ENCODE measurements at regions of chr4 and their contacts with region 1.

Region 1: DNA sequence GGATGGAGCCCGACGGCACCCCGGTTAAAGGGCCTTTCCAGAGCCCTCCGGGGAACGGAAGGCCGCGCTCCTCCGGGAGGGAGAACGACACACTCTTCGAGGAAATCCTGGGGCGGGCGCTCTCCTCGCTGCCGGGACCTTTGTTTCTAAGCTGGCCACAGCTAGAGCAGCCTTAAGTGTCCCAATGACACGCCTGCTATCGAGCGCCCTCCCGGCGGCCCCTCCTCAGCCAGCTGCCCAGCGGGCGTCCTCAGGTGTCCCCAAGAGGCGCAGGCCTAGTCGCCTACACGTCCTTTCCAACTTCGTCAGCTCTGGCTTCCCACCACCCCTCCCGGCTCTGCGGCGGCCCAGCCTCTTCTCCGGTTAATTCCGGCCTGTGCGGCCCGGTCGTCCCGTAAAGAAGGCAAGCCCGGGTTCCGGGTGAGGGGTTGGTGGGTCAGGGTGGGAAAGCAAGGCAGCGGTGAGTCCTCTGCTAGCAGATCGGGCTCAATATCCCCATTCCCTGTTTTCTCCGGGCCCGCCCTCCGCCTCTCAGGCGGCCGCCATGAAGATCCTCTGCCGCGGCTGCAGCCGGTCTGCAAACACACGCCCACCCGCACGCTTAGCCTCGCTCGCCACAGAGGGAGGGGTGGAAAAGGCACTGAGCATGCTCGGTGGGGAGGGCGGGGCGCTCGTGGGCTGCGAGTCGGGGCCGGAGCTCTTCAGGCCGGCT is 449 bp upstream of the RAP1GDS1 start:
- DNase-seq: peak; percentile 95
- ATAC-seq: peak; percentile 91
- H3K4me3 ChIP-seq: peak overlapping the region; percentile 71 to 98 (median 95)
- H3K4me3 Mint-ChIP-seq: peak overlapping the region; percentile 97
- H3K27ac ChIP-seq: peak overlapping the region; percentile 84 to 90
- H3K27ac Mint-ChIP-seq: peak overlapping the region; percentile 98
- H3K4me1 ChIP-seq: peaks cover 18 to 25% of the 10 kb centered on the region in 2 donors
- H3K4me1 Mint-ChIP-seq: peaks cover 40% of the 10 kb centered on the region
- H3K27me3 ChIP-seq: no peaks in the 10 kb centered on the region
- H3K27me3 Mint-ChIP-seq: no peaks in the 10 kb centered on the region
- CTCF ChIP-seq: no peak

Region 2: GRCh38 chr4:98150092-98150761 is 110.5 kb before region 1 on chr4:
- CTCF ChIA-PET with region 1: interaction called, 8 read pairs
- POLR2A ChIA-PET with region 1: interaction called, 5 read pairs
- intact Hi-C with region 1: loop called (anchors 2 kb)
- DNase-seq: peak; percentile 13
- ATAC-seq: no peak
- H3K4me3 ChIP-seq: no peak overlapping the region
- H3K4me3 Mint-ChIP-seq: no peak overlapping the region
- H3K27ac ChIP-seq: no peak overlapping the region
- H3K27ac Mint-ChIP-seq: no peak overlapping the region
- H3K4me1 ChIP-seq: peaks cover 7 to 20% of the 10 kb centered on the region in 2 donors
- H3K4me1 Mint-ChIP-seq: peaks cover 23% of the 10 kb centered on the region
- H3K27me3 ChIP-seq: no peaks in the 10 kb centered on the region
- H3K27me3 Mint-ChIP-seq: no peaks in the 10 kb centered on the region
- CTCF ChIP-seq: peak; percentile 70

Region 3: DNA sequence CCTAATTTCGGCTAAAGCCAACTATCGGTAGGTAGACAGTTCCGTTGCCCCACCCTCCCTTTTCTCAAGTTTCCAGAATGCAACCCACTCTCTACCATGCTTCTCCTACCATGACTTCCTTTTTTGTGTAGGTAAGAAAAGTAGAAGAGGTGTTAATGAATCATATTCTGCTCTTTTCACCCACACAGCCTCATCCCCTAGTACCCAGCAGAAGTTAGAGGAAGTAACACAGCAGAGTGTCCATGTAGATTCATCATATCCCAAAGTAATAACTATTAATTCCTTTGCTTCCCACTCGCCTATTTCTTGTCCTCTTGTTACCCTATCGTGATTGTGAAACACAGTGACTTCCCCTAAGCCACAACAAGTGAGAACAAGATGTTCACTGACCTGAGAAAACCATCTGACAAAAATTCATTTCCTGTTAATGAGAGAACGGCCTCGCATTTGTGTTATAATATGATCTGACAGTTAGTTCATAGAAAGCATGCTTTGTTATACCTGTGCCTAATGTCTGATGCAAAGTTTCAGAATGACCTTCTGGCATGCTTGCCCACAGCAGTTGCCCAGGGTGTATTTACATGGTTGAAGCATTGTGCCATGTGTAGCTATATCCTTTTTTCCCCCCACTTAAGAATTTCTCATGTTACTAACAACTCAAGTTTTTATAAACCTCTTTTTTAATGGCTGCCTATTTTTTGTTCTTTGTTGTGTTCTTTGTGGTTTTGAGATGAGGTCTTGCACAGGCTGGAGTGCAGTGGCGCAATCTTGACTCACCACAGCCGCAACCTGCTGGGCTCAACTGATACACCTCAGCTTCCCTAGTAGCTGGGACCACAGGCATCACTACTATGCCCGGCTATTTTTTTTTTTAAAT is 186.0 kb after region 1 on chr4:
- CTCF ChIA-PET with region 1: interaction called, 3 read pairs
- POLR2A ChIA-PET with region 1: interaction called, 3 read pairs
- intact Hi-C with region 1: loop called (anchors 2 kb)
- DNase-seq: peak; percentile 75
- ATAC-seq: peak; percentile 72
- H3K4me3 ChIP-seq: peak overlapping the region in 4 of 5 experiments; percentile 32 to 53 (median 48)
- H3K4me3 Mint-ChIP-seq: peak overlapping the region; percentile 75
- H3K27ac ChIP-seq: peak overlapping the region; percentile 69 to 70
- H3K27ac Mint-ChIP-seq: peak overlapping the region; percentile 93
- H3K4me1 ChIP-seq: peaks cover 35 to 42% of the 10 kb centered on the region in 2 donors
- H3K4me1 Mint-ChIP-seq: peaks cover 45% of the 10 kb centered on the region
- H3K27me3 ChIP-seq: no peaks in the 10 kb centered on the region
- H3K27me3 Mint-ChIP-seq: no peaks in the 10 kb centered on the region
- CTCF ChIP-seq: no peak

Region 4: DNA sequence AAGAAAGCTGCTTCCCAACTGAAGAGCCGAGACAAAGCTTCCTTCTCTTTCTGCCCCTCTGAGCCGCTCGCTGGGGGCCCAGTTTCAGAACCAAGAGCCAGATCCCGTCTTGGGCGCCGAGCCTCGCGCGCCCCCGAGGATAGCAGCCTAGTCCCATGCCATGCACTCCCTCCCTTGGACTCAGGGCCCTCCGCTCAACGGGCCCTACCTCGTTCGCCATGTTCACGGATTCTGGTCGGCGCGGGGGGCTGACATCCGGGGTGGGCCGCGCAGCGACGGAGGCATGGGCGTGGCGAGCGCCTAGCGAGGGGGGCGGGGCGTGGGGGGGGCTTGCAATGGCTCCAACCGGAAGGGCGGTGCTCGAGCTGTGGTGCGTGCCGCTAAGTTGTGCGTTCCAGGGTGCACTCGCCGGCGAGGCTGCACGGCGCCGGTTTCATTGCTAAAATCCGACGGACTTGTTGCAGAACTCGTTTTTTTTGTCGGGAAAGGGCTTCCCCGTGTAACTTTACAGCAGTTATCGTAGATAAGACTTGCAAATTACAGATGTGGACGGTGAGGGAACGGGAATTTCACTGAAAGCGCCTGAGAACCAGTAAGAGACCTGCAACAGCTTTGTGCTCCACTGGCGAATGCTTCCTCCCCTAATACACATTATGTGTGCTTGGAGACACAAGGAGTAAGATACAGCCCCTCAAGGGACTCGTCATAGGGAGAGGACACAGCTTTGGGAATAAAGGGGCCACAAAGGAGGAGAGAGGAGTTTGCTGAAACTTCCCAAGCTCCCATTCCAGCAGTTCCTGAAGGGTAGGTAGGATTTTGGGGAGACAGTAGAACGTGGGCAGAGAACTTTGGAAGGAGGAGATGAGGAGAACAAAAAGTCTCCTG is 828.0 kb after region 1 on chr4 and contains the start of gene ADH5:
- CTCF ChIA-PET with region 1: no interaction called
- POLR2A ChIA-PET with region 1: no interaction called
- intact Hi-C with region 1: loop called (anchors 2 kb)
- DNase-seq: peak; percentile 90
- ATAC-seq: peak; percentile 95
- H3K4me3 ChIP-seq: peak within 1 kb of the TSS; percentile 75 to 99 (median 96)
- H3K4me3 Mint-ChIP-seq: peak within 1 kb of the TSS; percentile 98
- H3K27ac ChIP-seq: peak within 1 kb of the TSS; percentile 84
- H3K27ac Mint-ChIP-seq: peak within 1 kb of the TSS; percentile 98
- H3K4me1 ChIP-seq: peaks cover 15 to 25% of the 10 kb centered on the region in 2 donors
- H3K4me1 Mint-ChIP-seq: peaks cover 46% of the 10 kb centered on the region
- H3K27me3 ChIP-seq: no peaks in the 10 kb centered on the region
- H3K27me3 Mint-ChIP-seq: no peaks in the 10 kb centered on the region
- CTCF ChIP-seq: no peak
- total RNA-seq, gene ADH5: 59.2 and 65.6 TPM in 2 replicates